Activated naive CD4-positive, alpha-beta T cell treated with anti-CD3 and anti-CD28 coated beads for 36 hours (primary cell): ENCODE measurements at regions of chr14 and their contacts with region 1.

Region 1: GRCh38 chr14:23006544-23007419 is 3.2 kb downstream of the C14orf93 start:
- DNase-seq: peak; percentile 99
- H3K4me3 Mint-ChIP-seq: peak overlapping the region; percentile 96
- H3K27ac Mint-ChIP-seq: peak overlapping the region; percentile 98
- H3K4me1 Mint-ChIP-seq: peaks cover 36% of the 10 kb centered on the region
- H3K27me3 Mint-ChIP-seq: no peaks in the 10 kb centered on the region

Region 2: GRCh38 chr14:22955702-22956569 is 50.8 kb before region 1 on chr14:
- CTCF ChIA-PET with region 1: interaction called, 4 read pairs
- intact Hi-C with region 1: loop called (anchors 2 kb)
- DNase-seq: no peak
- H3K4me3 Mint-ChIP-seq: peak overlapping the region; percentile 89
- H3K27ac Mint-ChIP-seq: peak overlapping the region; percentile 84
- H3K4me1 Mint-ChIP-seq: peaks cover 22% of the 10 kb centered on the region
- H3K27me3 Mint-ChIP-seq: no peaks in the 10 kb centered on the region

Region 3: GRCh38 chr14:22994762-22995275 is 12.0 kb before region 1 on chr14:
- CTCF ChIA-PET with region 1: interaction called, 41 read pairs
- intact Hi-C with region 1: no loop called
- DNase-seq: peak; percentile 56
- H3K4me3 Mint-ChIP-seq: no peak overlapping the region
- H3K27ac Mint-ChIP-seq: no peak overlapping the region
- H3K4me1 Mint-ChIP-seq: no peaks in the 10 kb centered on the region
- H3K27me3 Mint-ChIP-seq: no peaks in the 10 kb centered on the region

Region 4: DNA sequence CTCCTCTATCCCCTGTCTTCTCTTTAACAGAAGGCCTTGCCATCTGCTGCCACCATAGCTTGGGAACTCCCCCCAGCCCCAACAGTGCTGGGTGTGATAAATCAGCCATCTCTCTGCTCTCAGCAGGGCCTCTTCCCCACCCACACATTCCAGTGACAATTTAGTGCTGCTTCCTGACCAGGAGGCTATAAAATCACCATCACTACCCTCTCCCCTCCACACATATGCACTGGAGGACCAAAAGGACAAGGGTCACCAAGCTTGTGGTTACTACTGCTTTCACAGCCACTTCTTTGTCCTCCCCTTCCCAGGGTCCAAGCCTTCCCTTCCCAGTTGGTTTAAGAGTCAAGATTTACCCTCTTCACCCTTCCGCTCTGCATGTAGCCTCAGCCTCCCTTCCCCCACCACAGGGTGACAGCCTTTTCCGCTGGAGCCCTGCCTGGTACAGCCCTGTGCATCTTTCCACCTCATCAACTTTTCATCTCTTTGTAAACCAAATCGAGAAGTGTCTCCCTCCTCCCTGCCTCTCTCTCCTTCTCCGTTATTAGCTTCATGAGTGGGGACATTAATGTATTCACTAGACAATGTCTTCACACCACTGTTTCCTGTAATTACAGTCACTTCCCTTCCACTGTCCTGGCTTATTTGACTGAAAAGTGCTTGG is 18.5 kb after region 1 on chr14:
- CTCF ChIA-PET with region 1: interaction called, 11 read pairs
- intact Hi-C with region 1: loop called (anchors 1 kb)
- DNase-seq: peak; percentile 55
- H3K4me3 Mint-ChIP-seq: peak overlapping the region; percentile 16
- H3K27ac Mint-ChIP-seq: peak overlapping the region; percentile 85
- H3K4me1 Mint-ChIP-seq: peaks cover 73% of the 10 kb centered on the region
- H3K27me3 Mint-ChIP-seq: no peaks in the 10 kb centered on the region

Region 5: DNA sequence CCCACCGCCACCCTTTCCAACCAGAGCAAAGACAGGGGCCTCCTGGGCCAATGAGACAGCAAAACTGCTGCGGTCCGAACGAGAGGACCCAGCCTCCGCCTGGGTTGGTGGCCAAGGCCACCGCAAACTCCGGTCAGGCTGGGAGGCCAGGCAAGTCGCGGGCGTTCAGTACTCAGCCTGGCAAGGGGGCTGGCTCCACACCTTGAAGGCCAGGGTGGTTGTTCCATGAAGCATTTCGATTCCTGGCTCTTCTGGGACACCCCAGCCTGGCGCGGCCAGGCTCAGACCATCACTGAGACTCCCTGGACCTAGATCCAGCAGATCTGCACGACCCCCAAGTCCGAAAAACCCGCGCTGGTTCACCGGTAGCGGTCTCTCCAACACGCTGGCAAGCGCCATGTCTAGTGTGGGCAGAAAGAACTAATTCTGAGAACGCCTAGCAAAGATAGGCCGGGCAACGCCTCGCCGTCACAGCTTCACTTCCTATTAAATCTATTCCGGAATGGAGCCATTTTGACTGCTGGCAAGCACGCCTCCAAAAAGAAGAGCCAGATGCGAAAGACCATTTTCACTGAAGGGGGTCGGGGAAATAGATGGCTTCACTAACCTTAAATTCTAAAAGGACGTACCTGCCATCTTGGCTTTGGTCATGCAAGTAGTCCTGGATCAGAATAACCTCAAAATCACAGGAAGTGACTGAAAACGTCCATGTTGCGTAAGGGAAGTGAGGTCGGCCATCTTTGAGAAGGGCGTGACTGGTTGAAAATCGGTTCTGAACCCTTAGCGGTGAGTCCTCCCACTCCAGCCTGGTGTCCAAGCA is 27.9 kb after region 1 on chr14 and contains the start of gene PSMB5:
- CTCF ChIA-PET with region 1: interaction called, 4 read pairs
- intact Hi-C with region 1: loop called (anchors 1 kb)
- DNase-seq: peak; percentile 96
- H3K4me3 Mint-ChIP-seq: peak within 1 kb of the TSS; percentile 88
- H3K27ac Mint-ChIP-seq: peak within 1 kb of the TSS; percentile 96
- H3K4me1 Mint-ChIP-seq: peaks cover 34% of the 10 kb centered on the region
- H3K27me3 Mint-ChIP-seq: no peaks in the 10 kb centered on the region
- total RNA-seq, gene PSMB5: 120 to 125 TPM

Region 6: GRCh38 chr14:23101213-23101970 is 94.6 kb after region 1 on chr14:
- CTCF ChIA-PET with region 1: no interaction called
- intact Hi-C with region 1: no loop called
- DNase-seq: no peak
- H3K4me3 Mint-ChIP-seq: no peak overlapping the region
- H3K27ac Mint-ChIP-seq: no peak overlapping the region
- H3K4me1 Mint-ChIP-seq: peaks cover 15% of the 10 kb centered on the region
- H3K27me3 Mint-ChIP-seq: no peaks in the 10 kb centered on the region